ENCODE measurements at regions of chr2 and their contacts with region 1.

Region 1: DNA sequence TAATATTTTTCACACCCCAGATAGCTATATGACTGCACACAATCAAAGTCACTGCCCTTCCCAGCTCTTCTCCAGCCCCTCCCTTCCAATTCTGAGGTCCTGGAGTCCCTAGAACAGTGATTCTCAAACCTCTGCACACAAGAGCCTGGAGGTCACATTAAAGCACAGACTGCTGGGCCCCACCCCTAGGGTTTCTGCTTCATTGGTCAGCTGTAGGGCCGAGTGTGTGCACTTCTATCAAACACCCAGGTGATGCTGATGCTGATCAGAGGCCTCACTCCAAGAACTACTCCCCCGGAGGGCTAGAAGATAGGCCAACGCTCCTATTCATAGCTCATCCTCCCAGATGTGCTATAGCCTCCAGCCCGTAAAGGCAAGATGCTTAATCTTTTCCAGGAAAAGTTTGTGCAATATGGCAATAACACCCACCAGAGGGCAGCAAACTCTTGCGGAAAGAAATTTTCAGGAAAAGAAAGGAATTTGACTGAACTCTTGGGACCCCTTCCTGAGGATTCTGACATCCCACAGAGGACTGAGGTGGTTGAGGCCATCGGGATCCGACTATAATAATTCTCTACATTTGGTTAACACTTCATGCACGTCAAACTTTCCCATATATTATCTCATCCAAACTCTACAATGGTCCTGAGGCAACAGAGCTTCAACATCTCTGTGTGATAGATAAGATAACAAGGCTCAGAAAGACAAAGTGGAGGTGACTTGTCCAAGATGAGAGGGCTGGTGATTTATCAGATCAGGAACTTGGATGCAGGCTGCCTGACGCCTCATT is 194.2 kb upstream of the PKDCC start:
- DNase-seq: peak; percentile 77

Region 2: DNA sequence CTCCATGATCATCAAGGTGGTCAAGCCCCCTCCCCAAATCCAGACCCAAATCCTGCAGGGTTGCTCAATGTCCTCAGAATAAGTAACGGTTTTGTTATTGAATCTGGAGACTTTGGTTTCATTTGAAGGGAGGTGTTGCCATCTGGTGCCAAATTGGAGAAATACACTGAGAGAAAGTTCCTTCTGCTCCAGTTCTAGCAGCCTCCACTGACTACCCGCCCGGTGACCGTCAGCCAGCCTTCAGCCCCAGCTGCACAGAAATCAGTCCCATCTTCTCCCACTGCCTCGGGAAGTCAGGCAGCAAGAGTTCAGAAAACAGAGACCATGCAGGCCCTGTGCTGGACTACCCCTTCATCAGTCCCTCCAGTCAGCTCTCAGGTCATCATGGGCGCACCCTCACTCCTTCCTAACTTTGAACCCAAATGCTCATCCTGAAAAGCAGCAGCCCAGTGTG is 232.9 kb after region 1 on chr2:
- in situ Hi-C with region 1: loop called (anchors 10 kb)
- DNase-seq: peak; percentile 86

Region 3: GRCh38 chr2:42102024-42102590 is 248.5 kb after region 1 on chr2:
- in situ Hi-C with region 1: no loop called
- DNase-seq: no peak